ENCODE measurements at regions of chr1 and their contacts with region 1.

Region 1: DNA sequence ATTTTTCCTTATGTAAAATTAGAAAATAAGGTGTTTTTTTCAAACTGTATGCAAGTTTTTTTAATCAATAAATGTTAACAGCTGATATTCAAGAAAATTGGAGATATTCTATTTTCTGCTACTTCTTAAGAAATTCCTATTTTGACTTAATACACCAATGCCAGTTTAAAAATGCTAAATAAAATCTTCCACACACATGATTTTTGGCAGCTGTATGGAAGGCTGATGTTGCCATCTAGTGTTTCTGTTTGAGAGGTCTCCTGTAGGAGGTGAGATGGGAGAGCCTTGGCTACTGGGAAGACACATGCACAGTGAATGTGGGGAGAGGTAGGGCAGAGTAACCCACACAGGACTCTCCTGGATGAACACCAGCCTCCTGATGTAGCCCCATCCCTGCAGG is 29.2 kb upstream of the OR2B11 start:
- DNase-seq: peak; percentile 37
- ATAC-seq: peak; percentile 70
- H3K4me3 Mint-ChIP-seq: no peak overlapping the region
- H3K27ac Mint-ChIP-seq: no peak overlapping the region
- H3K4me1 Mint-ChIP-seq: no peaks in the 10 kb centered on the region
- H3K27me3 Mint-ChIP-seq: peaks cover 10% of the 10 kb centered on the region
- CTCF ChIP-seq: peak; percentile 77

Region 2: GRCh38 chr1:247373721-247374141 is 113.3 kb before region 1 on chr1:
- CTCF ChIA-PET with region 1: interaction called, 77 read pairs
- POLR2A ChIA-PET with region 1: no interaction called
- intact Hi-C with region 1: loop called (anchors 2 kb)
- DNase-seq: peak; percentile 80
- ATAC-seq: peak; percentile 82
- H3K4me3 Mint-ChIP-seq: peak overlapping the region; percentile 38
- H3K27ac Mint-ChIP-seq: no peak overlapping the region
- H3K4me1 Mint-ChIP-seq: peaks cover 6% of the 10 kb centered on the region
- H3K27me3 Mint-ChIP-seq: no peaks in the 10 kb centered on the region
- CTCF ChIP-seq: peak; percentile 49

Region 3: DNA sequence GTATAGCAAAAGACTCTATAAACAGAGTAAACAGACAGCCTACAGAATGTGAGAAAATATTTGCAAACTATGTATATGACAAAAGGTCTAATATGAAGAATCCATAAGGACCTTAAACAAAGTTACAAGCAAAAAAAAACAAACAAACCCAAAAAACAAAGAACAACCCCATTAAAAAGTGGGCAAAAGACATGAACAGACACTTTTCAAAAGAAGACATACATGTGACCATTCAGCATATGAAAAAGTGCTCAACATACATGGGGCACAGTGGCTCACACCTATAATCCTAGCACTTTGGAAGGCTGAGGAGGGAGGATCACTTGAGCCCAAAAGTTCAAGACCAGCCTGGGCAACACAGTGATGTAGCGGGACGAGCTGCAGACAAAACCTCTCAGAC is 11.3 kb before region 1 on chr1:
- CTCF ChIA-PET with region 1: interaction called, 17 read pairs
- POLR2A ChIA-PET with region 1: no interaction called
- intact Hi-C with region 1: no loop called
- DNase-seq: no peak
- ATAC-seq: no peak
- H3K4me3 Mint-ChIP-seq: no peak overlapping the region
- H3K27ac Mint-ChIP-seq: no peak overlapping the region
- H3K4me1 Mint-ChIP-seq: no peaks in the 10 kb centered on the region
- H3K27me3 Mint-ChIP-seq: no peaks in the 10 kb centered on the region
- CTCF ChIP-seq: no peak

Region 4: DNA sequence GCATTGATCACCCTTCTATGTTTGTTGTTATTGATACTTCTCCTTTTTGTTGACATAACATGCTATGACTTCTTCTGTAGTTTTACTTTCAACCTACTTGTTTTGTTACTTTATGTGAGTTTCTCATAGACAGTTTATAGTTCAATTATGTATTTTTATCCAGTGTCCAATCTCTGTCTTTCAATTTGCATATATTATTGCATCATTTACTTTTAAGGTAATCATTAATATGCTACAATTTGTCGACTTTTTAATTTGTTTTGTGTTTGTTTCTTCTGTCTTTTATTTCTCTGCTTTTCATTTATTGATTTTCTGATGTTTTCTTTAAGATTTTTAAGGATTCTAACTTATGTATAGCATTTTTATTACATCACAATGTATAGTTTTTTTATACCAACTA is 182.2 kb after region 1 on chr1:
- CTCF ChIA-PET with region 1: no interaction called
- POLR2A ChIA-PET with region 1: no interaction called
- intact Hi-C with region 1: no loop called
- DNase-seq: no peak
- ATAC-seq: no peak
- H3K4me3 Mint-ChIP-seq: no peak overlapping the region
- H3K27ac Mint-ChIP-seq: no peak overlapping the region
- H3K4me1 Mint-ChIP-seq: no peaks in the 10 kb centered on the region
- H3K27me3 Mint-ChIP-seq: peaks cover 2% of the 10 kb centered on the region
- CTCF ChIP-seq: no peak